Activated CD4-positive, alpha-beta T cell treated with anti-CD3 and anti-CD28 coated beads, Interleukin-2, amount 10 ng/mL, durations not matched to agents 24 days and 14 days (primary cell): ENCODE measurements at regions of chr1 and their contacts with region 1.

Region 1: GRCh38 chr1:109548321-109549267 is at the start of gene GNAI3:
- DNase-seq: peak; percentile 99
- H3K4me3 Mint-ChIP-seq: peak within 1 kb of the TSS; percentile 95
- H3K27ac Mint-ChIP-seq: peak within 1 kb of the TSS; percentile 96
- H3K4me1 Mint-ChIP-seq: peaks cover 46% of the 10 kb centered on the region
- H3K27me3 Mint-ChIP-seq: no peaks in the 10 kb centered on the region
- total RNA-seq, gene GNAI3: 8.7 and 8.8 TPM in 2 replicates

Region 2: GRCh38 chr1:109620841-109621286 is 72.3 kb after region 1 on chr1:
- intact Hi-C with region 1: loop called (anchors 1 kb)
- DNase-seq: peak; percentile 99
- H3K4me3 Mint-ChIP-seq: peak overlapping the region; percentile 96
- H3K27ac Mint-ChIP-seq: peak overlapping the region; percentile 95
- H3K4me1 Mint-ChIP-seq: peaks cover 64% of the 10 kb centered on the region
- H3K27me3 Mint-ChIP-seq: no peaks in the 10 kb centered on the region

Region 3: DNA sequence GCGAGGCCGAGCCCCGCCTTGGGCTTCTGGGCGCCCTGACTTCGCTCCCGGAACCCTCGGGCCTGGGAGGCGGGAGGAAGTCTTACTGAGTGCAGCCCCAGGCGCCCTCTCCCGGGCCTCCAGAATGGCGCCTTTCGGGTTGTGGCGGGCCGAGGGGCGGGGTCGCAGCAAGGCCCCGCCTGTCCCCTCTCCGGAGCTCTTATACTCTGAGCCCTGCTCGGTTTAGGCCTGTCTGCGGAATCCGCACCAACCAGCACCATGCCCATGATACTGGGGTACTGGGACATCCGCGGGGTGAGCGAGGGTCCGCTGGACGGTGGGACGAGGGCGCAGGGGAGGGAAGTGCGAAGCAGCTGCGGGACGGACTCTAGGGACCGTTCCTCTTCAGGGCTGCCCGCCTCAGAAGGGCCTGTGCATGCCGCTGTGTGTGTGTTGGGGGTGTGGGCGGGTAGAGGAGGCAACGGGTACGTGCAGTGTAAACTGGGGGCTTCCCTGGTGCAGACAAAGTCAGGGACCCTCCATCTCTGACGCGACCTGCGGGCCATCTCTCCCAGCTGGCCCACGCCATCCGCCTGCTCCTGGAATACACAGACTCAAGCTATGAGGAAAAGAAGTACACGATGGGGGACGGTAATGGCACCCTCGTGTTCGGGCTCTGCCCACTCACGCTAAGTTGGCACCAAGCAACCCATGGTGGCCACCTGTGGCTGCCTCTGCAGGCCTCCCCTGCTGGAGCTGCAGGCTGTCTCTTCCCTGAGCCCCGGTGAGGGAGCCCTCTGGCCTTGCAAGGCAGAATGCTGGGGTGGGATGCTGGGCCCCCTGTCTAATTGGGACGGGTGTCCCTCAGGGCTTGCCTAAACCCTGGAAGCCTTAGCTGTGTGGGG is 139.3 kb after region 1 on chr1 and contains the start of gene GSTM1:
- intact Hi-C with region 1: loop called (anchors 2 kb)
- DNase-seq: peak; percentile 97
- H3K4me3 Mint-ChIP-seq: peak within 1 kb of the TSS; percentile 87
- H3K27ac Mint-ChIP-seq: peak within 1 kb of the TSS; percentile 94
- H3K4me1 Mint-ChIP-seq: peaks cover 22% of the 10 kb centered on the region
- H3K27me3 Mint-ChIP-seq: no peaks in the 10 kb centered on the region
- total RNA-seq, gene GSTM1: 92.2 and 94.2 TPM in 2 replicates

Region 4: GRCh38 chr1:109910123-109910962 is 361.7 kb after region 1 on chr1 and contains the start of gene CSF1:
- intact Hi-C with region 1: loop called (anchors 2 kb)
- DNase-seq: peak; percentile 91
- H3K4me3 Mint-ChIP-seq: peak within 1 kb of the TSS; percentile 100
- H3K27ac Mint-ChIP-seq: peak within 1 kb of the TSS; percentile 97
- H3K4me1 Mint-ChIP-seq: peaks cover 82% of the 10 kb centered on the region
- H3K27me3 Mint-ChIP-seq: no peaks in the 10 kb centered on the region
- total RNA-seq, gene CSF1: 190 and 193 TPM in 2 replicates

Region 5: DNA sequence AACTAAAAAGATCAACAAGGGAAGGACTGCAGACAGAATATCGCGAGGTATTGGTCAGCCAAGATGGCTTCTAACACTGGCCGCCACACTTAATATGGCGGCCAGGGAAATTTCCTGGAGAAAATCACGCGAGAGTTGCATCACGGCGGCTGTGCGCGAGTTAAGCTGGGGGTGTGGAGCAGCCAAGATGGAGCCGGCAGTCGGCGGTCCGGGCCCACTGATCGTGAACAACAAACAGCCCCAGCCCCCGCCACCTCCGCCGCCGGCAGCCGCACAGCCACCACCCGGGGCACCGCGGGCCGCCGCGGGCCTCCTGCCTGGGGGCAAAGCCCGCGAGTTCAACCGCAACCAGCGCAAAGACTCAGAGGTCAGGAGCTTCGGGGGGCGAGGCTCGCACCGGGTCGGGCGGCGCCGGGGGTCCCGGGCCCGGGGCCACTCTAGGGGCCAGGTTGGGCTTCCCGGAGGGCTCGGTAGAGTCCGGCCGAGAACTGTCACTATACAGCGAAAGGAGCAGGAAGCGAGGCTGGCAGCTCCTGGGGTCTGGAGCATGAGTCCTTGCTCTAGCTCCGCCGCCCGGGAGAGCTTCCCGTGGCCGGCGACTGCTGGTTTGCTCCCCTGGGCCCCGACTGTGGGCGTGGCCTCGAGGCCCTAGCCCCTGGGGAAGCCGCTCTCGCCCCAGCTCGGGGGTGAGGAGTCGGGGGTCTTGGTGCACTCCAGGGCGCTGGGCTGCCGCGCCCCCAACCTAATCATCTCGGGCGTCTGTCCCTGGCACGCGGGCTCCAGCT is 486.0 kb after region 1 on chr1 and contains the start of gene STRIP1:
- intact Hi-C with region 1: loop called (anchors 1 kb)
- DNase-seq: peak; percentile 98
- H3K4me3 Mint-ChIP-seq: peak within 1 kb of the TSS; percentile 97
- H3K27ac Mint-ChIP-seq: peak within 1 kb of the TSS; percentile 86
- H3K4me1 Mint-ChIP-seq: peaks cover 46% of the 10 kb centered on the region
- H3K27me3 Mint-ChIP-seq: no peaks in the 10 kb centered on the region
- total RNA-seq, gene STRIP1: 41.0 and 43.8 TPM in 2 replicates